Mammary epithelial cell (primary cell): ENCODE measurements at regions of chr1 and their contacts with region 1.

Region 1: DNA sequence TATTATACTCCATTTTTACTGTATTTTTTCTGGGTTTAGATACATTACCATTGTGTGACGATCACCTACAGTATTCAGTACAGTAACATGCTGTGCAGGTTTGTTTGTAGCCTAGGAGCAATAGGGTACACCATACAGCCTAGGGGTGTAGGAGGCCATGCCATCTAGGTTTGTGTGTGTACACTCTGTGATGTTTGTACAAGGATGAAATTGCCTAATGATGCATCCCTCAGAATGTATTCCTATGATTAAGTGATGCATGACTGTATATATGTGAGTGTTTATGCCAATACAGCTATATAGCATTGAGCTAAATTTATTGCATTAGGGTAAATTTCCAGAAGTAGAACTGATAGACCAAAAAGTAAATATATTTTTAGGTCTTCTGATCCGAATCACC is 23.3 kb downstream of the TUFT1 start:
- DNase-seq: no peak
- H3K4me3 ChIP-seq: no peak overlapping the region
- H3K27ac ChIP-seq: no peak overlapping the region
- H3K4me1 ChIP-seq: peaks cover 18% of the 10 kb centered on the region
- H3K27me3 ChIP-seq: no peaks in the 10 kb centered on the region
- CTCF ChIP-seq: no peak

Region 2: GRCh38 chr1:151425103-151425502 is 138.3 kb before region 1 on chr1:
- CTCF ChIA-PET with region 1: no interaction called
- dilution Hi-C with region 1: no loop called
- in situ Hi-C with region 1: no loop called
- intact Hi-C with region 1: no loop called
- DNase-seq: no peak
- H3K4me3 ChIP-seq: no peak overlapping the region
- H3K27ac ChIP-seq: no peak overlapping the region
- H3K4me1 ChIP-seq: no peaks in the 10 kb centered on the region
- H3K27me3 ChIP-seq: no peaks in the 10 kb centered on the region
- CTCF ChIP-seq: no peak

Region 3: GRCh38 chr1:151485685-151486255 is 77.6 kb before region 1 on chr1:
- CTCF ChIA-PET with region 1: no interaction called
- dilution Hi-C with region 1: loop called (anchors 5 kb)
- in situ Hi-C with region 1: no loop called
- intact Hi-C with region 1: no loop called
- DNase-seq: no peak
- H3K4me3 ChIP-seq: no peak overlapping the region
- H3K27ac ChIP-seq: no peak overlapping the region
- H3K4me1 ChIP-seq: no peaks in the 10 kb centered on the region
- H3K27me3 ChIP-seq: no peaks in the 10 kb centered on the region
- CTCF ChIP-seq: no peak

Region 4: DNA sequence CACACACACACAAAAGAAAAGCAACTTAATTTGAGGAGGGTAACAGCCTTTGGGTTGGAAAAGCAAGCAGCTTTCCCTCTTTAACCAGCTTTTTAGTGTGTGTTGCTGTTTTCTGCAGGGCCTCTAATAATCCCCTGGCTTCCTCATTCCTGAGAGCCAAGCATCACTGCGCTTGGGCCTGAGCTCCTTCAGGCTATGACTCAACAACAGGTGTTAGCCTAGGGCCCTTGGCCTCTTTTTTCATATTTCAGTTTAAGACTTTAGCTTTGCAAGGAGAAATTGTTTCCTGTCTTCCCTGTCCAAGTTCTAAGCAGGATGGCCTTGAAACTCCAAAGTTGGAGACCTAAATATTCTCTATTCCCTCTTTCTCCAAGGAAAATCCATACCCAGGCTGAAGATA is 22.2 kb after region 1 on chr1:
- CTCF ChIA-PET with region 1: no interaction called
- dilution Hi-C with region 1: no loop called
- in situ Hi-C with region 1: no loop called
- intact Hi-C with region 1: no loop called
- DNase-seq: peak; percentile 70
- H3K4me3 ChIP-seq: no peak overlapping the region
- H3K27ac ChIP-seq: no peak overlapping the region
- H3K4me1 ChIP-seq: peaks cover 28% of the 10 kb centered on the region
- H3K27me3 ChIP-seq: no peaks in the 10 kb centered on the region
- CTCF ChIP-seq: no peak

Region 5: DNA sequence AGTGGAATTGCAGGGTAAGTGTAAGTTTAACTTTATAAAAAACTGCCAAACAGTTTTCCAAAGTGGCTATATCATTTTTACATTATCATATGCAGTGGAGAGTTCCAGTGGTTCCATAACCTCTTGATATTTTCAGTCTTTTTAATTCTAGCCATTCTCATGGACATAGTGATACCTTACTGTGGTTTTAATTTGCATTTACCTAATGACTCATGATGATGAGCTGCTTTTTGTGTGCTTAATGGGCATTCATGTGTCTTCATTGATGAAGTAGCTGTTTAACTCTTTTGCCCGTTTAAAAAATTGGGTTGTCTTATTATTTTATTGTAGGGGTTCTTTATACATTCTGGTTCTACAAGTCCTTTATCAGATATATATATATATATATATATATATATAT is 77.8 kb after region 1 on chr1:
- CTCF ChIA-PET with region 1: no interaction called
- dilution Hi-C with region 1: no loop called
- in situ Hi-C with region 1: no loop called
- intact Hi-C with region 1: no loop called
- DNase-seq: peak; percentile 19
- H3K4me3 ChIP-seq: no peak overlapping the region
- H3K27ac ChIP-seq: no peak overlapping the region
- H3K4me1 ChIP-seq: peaks cover 8% of the 10 kb centered on the region
- H3K27me3 ChIP-seq: no peaks in the 10 kb centered on the region
- CTCF ChIP-seq: no peak